Psoas muscle (tissue), 8 donors: ENCODE measurements at regions of chr2 and their contacts with region 1.

Region 1: GRCh38 chr2:237408335-237409000 is 5.5 kb downstream of the COL6A3 start:
- DNase-seq: peak; percentile 56 to 70
- ATAC-seq: peak in 2 of 4 donors; percentile 8 to 11
- H3K4me3 ChIP-seq: peak overlapping the region; percentile 59
- H3K27ac ChIP-seq: peak overlapping the region; percentile 50
- H3K4me1 ChIP-seq: peaks cover 21% of the 10 kb centered on the region
- H3K27me3 ChIP-seq: no peaks in the 10 kb centered on the region
- CTCF ChIP-seq: no peak

Region 2: DNA sequence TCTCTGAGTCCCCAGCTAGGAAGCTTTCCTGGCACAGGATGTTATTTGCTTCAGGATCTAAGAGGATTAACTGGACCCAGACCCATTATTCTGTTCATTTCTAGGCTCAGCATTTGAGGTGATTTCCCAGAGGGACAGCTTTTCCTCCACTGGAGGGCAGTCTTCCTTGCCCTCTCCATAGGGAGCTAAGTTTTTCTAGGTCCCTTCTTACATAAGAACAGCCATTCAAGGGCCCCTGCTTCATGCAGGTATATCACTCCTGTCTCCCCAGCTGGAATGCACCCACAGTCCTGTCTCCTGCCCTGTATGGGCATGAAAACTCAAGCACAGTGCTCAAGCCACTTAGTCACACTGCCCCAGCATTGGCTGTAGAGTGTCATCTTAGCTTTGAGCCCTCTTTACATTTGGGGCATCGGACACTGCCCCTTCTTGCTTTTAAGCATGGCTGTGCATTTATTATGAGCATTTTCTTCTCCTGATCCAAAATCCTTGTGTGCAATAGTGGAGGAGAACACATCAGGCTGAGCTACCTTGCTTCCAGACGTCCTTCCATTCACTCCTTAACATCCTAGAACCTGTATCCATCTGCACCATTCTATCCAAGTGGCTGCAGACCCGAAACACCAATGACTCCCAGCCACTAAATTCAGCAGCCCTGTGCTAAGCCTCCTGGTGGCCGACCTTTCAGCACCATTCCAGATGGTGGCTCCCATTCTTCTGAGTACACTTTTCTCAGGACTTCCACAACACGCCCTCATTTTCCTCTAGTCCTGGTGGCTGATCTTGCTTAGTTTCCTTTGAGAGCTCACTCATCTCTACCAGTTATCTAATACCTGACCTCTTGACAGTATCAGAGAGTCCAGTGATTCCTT is 242.8 kb before region 1 on chr2:
- intact Hi-C with region 1: loop called (anchors 5 kb)
- DNase-seq: no peak
- ATAC-seq: peak in 1 of 4 donors; percentile 55
- H3K4me3 ChIP-seq: no peak overlapping the region
- H3K27ac ChIP-seq: no peak overlapping the region
- H3K4me1 ChIP-seq: no peaks in the 10 kb centered on the region
- H3K27me3 ChIP-seq: no peaks in the 10 kb centered on the region
- CTCF ChIP-seq: peak; percentile 43

Region 3: DNA sequence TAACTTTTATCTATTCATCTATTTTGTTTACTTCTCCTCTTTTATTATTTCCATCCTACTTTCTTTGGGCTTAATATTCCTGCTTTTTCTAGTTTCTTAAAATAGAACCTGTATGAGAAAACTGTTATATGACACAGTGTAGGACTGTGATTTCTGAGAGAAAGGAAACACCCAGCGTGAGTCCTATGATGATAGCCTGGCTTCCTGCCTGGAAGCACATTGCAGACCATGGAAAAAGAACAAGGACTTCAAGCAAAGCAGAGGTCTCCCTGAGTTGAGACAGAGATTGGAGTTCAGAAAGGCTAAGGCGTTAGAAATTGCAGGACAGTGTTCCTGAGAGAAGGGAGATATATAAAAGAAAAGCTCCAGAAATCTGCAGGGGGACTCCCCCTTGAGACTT is 397.9 kb after region 1 on chr2:
- intact Hi-C with region 1: no loop called
- DNase-seq: no peak
- ATAC-seq: no peak
- H3K4me3 ChIP-seq: no peak overlapping the region
- H3K27ac ChIP-seq: no peak overlapping the region
- H3K4me1 ChIP-seq: no peaks in the 10 kb centered on the region
- H3K27me3 ChIP-seq: no peaks in the 10 kb centered on the region
- CTCF ChIP-seq: no peak